Activated T-helper 1 cell treated with anti-CD3 and anti-CD28 coated beads, Interleukin-12 subunit alpha, Interleukin-12 subunit beta, Interleukin-2, Interleukin-4 antibody, amounts not matched to agents 30 ng/mL and 10 ng/mL and 1 ng/mL, durations not matched to agents 14 hours and 24 hours and 36 hours (primary cell): ENCODE measurements at regions of chr6 and their contacts with region 1.

Region 1: GRCh38 chr6:127464881-127465459 is 5.8 kb upstream of the KIAA0408 start:
- DNase-seq: peak; percentile 36
- H3K4me3 Mint-ChIP-seq: no peak overlapping the region
- H3K27ac Mint-ChIP-seq: no peak overlapping the region
- H3K4me1 Mint-ChIP-seq: peaks cover 9% of the 10 kb centered on the region
- H3K27me3 Mint-ChIP-seq: peaks cover under 1% of the 10 kb centered on the region

Region 2: GRCh38 chr6:127302728-127303660 is 162.0 kb before region 1 on chr6:
- intact Hi-C with region 1: loop called (anchors 1 kb)
- DNase-seq: no peak
- H3K4me3 Mint-ChIP-seq: no peak overlapping the region
- H3K27ac Mint-ChIP-seq: no peak overlapping the region
- H3K4me1 Mint-ChIP-seq: peaks cover 10% of the 10 kb centered on the region
- H3K27me3 Mint-ChIP-seq: no peaks in the 10 kb centered on the region

Region 3: GRCh38 chr6:127539272-127539671 is 74.3 kb after region 1 on chr6:
- intact Hi-C with region 1: loop called (anchors 1 kb)
- DNase-seq: no peak
- H3K4me3 Mint-ChIP-seq: no peak overlapping the region
- H3K27ac Mint-ChIP-seq: no peak overlapping the region
- H3K4me1 Mint-ChIP-seq: peaks cover 5% of the 10 kb centered on the region
- H3K27me3 Mint-ChIP-seq: peaks cover 17% of the 10 kb centered on the region

Region 4: DNA sequence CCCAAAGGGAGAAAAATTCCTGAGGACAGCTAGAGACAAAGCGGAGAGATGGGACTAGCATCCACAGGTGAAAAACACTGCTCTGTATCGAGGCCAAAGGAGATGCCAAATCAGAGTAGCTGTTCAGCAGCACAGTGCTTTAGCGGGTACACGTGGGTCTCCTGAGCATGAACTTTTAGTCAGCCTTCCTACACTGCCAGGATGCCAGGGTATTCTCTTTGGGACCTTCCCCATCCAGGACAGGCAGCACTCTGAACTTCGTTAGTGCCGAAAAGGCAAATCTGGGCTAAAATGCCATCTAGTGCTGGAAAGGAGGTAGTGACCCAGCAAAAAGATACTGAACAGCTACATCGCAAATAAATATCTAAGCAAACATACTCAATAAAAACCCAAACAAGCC is 176.9 kb after region 1 on chr6:
- intact Hi-C with region 1: loop called (anchors 5 kb)
- DNase-seq: no peak
- H3K4me3 Mint-ChIP-seq: no peak overlapping the region
- H3K27ac Mint-ChIP-seq: no peak overlapping the region
- H3K4me1 Mint-ChIP-seq: no peaks in the 10 kb centered on the region
- H3K27me3 Mint-ChIP-seq: peaks cover 10% of the 10 kb centered on the region